Right lobe of liver (tissue), 6 donors: ENCODE measurements at regions of chr6 and their contacts with region 1.

Region 1: DNA sequence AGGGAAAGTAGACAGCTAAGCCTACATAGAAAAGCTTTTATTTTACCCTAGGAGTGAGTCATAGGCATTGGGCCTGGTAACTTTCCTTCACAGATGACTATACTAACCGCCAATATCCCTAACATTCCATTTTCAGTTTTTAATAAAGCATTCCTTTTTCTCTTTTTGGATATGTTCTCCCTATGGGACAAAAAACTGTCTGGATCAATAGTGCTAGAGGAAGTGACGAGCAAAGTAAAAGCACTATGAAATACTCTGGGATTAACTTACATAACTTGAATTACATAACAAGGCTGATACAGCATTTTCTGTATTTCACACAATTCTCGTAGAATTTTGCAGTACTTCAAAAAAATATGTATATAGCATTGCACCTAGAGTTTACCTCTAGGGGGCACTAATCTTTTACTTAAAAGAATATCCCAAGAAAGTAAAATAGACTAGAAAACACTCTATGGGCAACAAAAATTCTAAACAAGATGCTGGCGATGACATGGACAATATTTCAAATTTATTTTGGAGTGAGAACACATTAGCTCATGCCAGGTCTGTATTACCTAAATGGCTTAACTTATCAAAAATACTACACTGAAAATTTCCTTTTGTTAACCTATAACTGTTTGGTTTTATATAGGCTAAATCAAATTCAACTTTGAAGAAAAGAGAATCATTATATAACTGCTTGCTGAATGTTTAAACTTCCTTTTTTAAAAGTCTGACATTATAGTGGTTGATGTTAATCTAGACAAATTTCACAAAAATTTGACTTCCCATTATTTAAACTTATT is 66.3 kb upstream of the DST start:
- DNase-seq: no peak
- ATAC-seq: peak; percentile 49 to 80 (median 64)
- H3K4me3 ChIP-seq: no peak overlapping the region
- H3K27ac ChIP-seq: peak overlapping the region in 2 of 3 donors; percentile 6 to 20
- H3K4me1 ChIP-seq: peaks cover 0 to 15% (median 2%) of the 10 kb centered on the region in 4 donors
- H3K27me3 ChIP-seq: no peaks in the 10 kb centered on the region
- CTCF ChIP-seq: peak; percentile 55 to 74 (median 68)
- POLR2A ChIP-seq: no peak

Region 2: DNA sequence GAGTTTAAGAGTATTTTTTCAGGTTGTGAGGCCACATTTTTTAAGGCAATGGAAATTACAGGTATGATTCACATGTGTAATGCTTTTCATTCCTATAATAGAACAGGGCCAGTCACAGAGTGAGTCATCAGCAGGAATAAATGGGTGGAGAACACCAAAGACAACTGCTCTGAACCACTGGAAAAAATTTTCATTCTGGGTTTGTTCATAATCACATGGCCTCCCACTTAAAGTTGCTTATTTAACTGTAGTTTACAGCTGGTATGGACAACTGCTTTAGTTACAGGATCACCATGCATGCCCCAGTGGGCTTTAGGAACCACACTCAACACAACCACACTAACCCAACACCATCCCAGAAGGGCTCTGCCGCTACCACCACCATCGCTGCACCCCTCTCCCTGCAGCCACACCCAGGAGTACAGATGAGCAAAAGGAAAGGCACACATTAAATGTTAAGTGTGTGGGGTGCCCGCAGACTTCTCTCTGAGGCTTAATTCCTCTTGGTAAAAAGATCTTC is 40.7 kb after region 1 on chr6:
- intact Hi-C with region 1: loop called in 1 of 2 experiments (anchors 5 kb)
- DNase-seq: no peak
- ATAC-seq: peak in 1 of 4 donors; percentile 69
- H3K4me3 ChIP-seq: no peak overlapping the region
- H3K27ac ChIP-seq: no peak overlapping the region
- H3K4me1 ChIP-seq: peaks cover 0 to 6% (median 2%) of the 10 kb centered on the region in 4 donors
- H3K27me3 ChIP-seq: no peaks in the 10 kb centered on the region
- CTCF ChIP-seq: no peak
- POLR2A ChIP-seq: no peak

Region 3: DNA sequence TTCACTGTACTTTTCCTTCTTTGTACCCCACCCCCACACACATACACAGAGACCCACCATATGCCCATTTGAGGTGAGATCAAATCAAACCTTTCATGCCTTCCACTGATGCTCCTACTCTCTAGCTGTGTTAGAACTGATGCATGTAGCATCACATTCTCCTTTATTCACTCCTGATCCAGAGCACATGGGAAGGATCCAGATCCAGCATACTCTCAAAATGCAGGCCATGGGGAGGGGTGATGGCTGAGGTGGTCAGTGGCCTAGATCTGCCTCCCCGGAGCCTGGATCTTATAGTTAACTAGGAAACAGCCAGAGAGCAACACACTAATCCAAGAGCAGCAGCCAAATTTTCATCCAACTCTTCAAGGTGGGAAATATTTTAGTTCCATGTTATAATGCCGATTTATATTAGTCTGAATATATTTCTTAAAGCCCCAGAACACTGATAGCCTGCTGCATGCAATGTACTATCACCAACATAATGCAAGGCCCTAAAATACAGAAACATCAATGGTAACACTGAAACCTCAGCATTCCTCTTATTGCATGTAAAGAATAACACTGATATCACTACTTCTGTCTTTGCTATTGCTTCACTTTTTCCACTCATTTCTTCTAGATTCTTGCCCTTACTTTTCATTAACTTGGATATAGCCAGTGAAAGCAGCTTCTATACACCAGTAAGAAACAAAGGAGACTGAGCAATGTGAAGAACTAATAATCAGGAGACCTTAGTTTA is 119.1 kb after region 1 on chr6:
- intact Hi-C with region 1: loop called in 1 of 2 experiments (anchors 5 kb)
- DNase-seq: no peak
- ATAC-seq: no peak
- H3K4me3 ChIP-seq: no peak overlapping the region
- H3K27ac ChIP-seq: no peak overlapping the region
- H3K4me1 ChIP-seq: no peaks in the 10 kb centered on the region
- H3K27me3 ChIP-seq: no peaks in the 10 kb centered on the region
- CTCF ChIP-seq: no peak
- POLR2A ChIP-seq: no peak